ENCODE measurements at regions of chr3 and their contacts with region 1.

Region 1: DNA sequence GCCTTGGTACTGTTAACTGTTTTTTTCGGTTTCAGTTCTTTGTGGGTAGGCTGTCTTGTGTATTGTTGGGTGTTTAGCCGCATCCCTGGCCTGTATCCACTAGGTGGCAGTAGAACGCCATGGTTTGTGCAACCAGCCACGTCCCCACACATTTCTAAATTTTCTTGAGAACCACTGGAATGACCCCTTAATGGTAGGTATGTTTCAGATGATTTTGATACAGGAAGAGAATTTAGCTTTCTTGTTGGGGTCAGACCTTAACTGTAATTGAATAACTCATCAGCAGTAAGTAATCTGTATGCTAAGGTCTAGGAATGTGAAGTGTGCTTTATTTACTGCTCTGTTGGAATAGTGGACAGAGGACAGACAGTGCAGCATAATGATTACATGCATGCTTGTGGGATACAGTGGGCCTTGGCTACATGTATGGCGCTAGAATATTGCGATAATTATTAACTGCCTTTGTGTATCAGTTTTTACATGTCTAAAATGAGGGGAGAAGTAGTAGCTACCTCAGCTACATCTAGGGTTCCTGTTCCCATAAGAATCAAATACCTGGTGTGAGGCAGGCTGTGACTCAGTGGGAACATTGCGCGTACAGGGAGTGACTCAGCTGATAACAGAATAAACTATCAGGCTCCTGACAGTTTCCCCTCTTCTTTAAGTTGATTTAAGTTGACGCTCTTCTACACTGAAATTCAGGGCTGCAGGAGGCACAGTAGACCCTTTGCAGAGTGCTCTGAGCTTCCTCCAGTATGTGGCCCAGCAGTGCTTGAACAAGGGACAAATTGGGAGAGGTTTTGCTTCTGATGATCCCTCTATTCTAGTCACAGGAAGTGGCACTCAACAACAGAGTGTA is 25.0 kb upstream of the GPR171 start:
- DNase-seq: peak; percentile 79
- H3K4me3 ChIP-seq: no peak overlapping the region
- H3K27ac ChIP-seq: peak overlapping the region; percentile 40
- H3K4me1 ChIP-seq: peaks cover 11% of the 10 kb centered on the region
- H3K27me3 ChIP-seq: no peaks in the 10 kb centered on the region
- CTCF ChIP-seq: peak; percentile 87 to 88
- POLR2A ChIP-seq: no peak

Region 2: GRCh38 chr3:151282921-151283320 is 54.9 kb after region 1 on chr3:
- CTCF ChIA-PET with region 1: interaction called, 75 read pairs
- POLR2A ChIA-PET with region 1: no interaction called
- dilution Hi-C with region 1: no loop called
- intact Hi-C with region 1: loop called (anchors 1 kb)
- DNase-seq: peak; percentile 58
- H3K4me3 ChIP-seq: no peak overlapping the region
- H3K27ac ChIP-seq: no peak overlapping the region
- H3K4me1 ChIP-seq: no peaks in the 10 kb centered on the region
- H3K27me3 ChIP-seq: peaks cover 0 to 6% of the 10 kb centered on the region in 2 experiments
- CTCF ChIP-seq: peak; percentile 30 to 42
- POLR2A ChIP-seq: no peak

Region 3: DNA sequence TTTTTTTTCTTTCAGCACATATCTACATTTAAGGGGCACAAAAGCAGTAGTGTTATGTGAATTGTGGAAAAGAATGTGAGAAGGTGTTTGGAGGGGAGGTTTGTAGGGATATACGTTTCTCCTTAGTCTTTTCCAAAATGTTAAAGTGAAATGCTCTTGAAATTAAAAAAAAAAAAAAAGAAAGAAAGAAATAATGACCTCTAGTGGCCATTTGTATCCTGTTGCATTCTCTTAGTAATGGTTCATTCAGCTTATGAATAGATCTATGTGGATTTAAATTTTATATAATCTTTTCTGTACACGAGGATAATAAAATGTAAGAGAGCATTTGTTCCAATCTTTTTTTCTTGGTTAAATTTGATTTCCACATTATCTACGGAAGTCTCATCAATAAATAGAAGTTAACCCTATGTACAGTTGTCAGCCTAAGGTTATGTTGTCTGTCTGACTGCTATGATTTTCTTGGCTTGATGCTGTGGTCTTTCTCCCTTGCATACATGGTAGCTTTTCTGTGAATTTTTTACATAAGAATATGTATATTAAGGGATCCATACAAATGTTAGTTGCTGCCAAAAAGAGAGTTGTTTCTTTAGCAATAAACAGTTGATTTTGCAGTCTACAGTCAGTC is 99.6 kb after region 1 on chr3:
- CTCF ChIA-PET with region 1: interaction called, 12 read pairs
- POLR2A ChIA-PET with region 1: no interaction called
- dilution Hi-C with region 1: no loop called
- intact Hi-C with region 1: loop called (anchors 1 kb)
- DNase-seq: peak; percentile 27
- H3K4me3 ChIP-seq: no peak overlapping the region
- H3K27ac ChIP-seq: no peak overlapping the region
- H3K4me1 ChIP-seq: no peaks in the 10 kb centered on the region
- H3K27me3 ChIP-seq: no peaks in the 10 kb centered on the region
- CTCF ChIP-seq: peak in 1 of 2 donors; percentile 25
- POLR2A ChIP-seq: no peak

Region 4: DNA sequence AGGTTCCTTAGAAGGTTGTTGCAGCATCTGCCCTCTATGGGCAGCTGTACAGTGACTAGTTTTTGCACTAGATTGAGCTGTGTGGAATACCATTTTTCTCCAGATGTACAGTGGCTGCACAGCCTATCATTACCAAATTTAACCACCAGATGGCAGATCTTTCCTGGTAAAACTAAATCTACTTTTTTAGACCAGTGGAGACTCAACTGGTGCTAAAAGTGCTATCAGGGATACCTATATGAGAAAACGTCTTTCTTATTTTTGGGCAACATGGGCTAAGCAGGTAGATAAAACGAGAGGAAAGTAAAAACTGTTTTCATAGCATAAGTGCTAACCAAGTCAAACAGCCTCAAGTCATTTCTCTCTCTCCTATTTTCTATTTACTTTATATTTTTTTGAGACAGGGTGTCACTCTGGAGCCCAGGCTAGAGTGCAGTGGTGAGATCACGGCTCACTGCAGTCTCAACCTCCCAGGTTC is 211.7 kb after region 1 on chr3:
- CTCF ChIA-PET with region 1: interaction called, 4 read pairs
- POLR2A ChIA-PET with region 1: no interaction called
- dilution Hi-C with region 1: no loop called
- intact Hi-C with region 1: loop called (anchors 5 kb)
- DNase-seq: peak; percentile 65
- H3K4me3 ChIP-seq: no peak overlapping the region
- H3K27ac ChIP-seq: no peak overlapping the region
- H3K4me1 ChIP-seq: no peaks in the 10 kb centered on the region
- H3K27me3 ChIP-seq: no peaks in the 10 kb centered on the region
- CTCF ChIP-seq: peak; percentile 45 to 51
- POLR2A ChIP-seq: no peak

Region 5: DNA sequence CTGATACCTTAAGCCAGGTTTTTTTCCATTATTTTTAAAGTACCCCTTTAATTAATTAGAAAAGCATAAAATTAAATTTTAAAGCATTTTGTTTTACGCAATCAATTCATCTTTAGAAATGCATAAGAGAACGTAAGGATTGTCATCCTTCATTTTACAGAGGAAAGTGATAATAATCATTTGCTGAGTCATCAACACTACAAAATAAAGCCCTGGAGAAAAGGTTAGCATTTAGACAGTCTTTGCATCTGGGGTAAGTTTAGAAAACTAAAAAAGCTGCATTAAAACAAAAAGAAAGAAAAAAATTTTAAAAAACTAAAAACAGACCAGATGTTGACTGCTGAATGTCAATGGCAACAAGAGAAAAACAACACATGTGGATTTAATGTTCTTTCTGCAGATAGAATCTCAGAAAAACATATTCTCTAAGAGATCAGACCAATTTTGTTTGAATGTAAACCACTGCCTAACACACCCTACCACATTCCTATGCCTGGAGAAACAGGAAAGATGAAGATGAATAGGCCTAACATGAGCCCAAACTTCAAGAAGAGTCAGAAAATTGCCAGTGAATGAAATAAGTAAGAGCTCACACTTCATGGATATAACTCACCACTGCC is 705.3 kb after region 1 on chr3:
- CTCF ChIA-PET with region 1: no interaction called
- POLR2A ChIA-PET with region 1: no interaction called
- dilution Hi-C with region 1: no loop called
- intact Hi-C with region 1: no loop called
- DNase-seq: no peak
- H3K4me3 ChIP-seq: no peak overlapping the region
- H3K27ac ChIP-seq: no peak overlapping the region
- H3K4me1 ChIP-seq: peaks cover 8% of the 10 kb centered on the region
- H3K27me3 ChIP-seq: no peaks in the 10 kb centered on the region
- CTCF ChIP-seq: no peak
- POLR2A ChIP-seq: no peak